ENCODE measurements at regions of chr15 and their contacts with region 1.

Region 1: GRCh38 chr15:87604857-87605446 is 651.6 kb downstream of the NTRK3 start:
- DNase-seq: no peak
- ATAC-seq: no peak

Region 2: DNA sequence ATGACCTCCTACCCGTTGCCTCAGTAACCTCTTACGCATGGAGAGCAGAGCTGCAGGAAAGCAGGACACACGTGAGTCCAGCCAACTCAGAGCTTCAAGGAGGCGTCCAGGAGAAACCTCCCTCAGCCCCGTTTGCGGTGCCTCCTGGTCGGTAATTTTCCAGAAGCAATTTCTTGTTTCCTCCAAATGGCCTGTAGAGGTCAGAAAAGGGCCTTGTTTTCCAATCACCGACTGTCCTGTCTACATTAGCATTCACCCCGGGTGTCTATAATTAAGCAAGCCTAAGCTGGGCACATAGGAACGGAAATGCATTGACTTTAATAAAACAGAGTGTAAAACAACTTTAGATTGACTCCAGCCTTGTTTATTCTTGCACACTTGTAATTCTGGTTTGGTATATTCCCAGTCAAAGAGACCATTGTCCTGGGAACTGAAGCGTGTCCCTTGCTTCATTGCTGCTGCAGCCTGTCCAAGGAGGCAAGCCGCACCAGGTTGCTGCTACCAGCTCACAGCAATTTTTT is 689.1 kb before region 1 on chr15:
- intact Hi-C with region 1: loop called (anchors 5 kb)
- DNase-seq: no peak
- ATAC-seq: peak; percentile 63

Region 3: DNA sequence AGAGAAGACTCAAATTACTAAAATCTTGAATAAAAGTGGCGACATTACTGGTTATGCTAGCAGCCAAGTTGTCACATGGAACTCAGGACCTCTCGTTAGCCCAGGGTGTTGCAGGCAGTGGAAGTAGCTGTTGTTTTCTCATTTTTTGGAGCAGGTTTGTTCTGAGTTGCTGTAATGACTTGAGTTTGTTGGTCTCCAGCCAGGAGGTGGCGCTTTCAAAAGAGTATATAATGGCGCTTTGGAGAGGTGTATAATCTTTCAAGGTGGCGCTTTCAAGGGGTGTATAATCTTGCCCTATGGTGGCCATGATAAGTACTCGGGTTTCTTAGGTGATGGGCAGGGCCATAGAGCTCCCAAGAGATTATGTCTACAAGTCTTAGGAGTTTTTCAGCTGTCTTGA is 18.9 kb after region 1 on chr15:
- intact Hi-C with region 1: no loop called
- DNase-seq: no peak
- ATAC-seq: no peak

Region 4: GRCh38 chr15:88042047-88042446 is 437.1 kb after region 1 on chr15:
- intact Hi-C with region 1: no loop called
- DNase-seq: no peak
- ATAC-seq: no peak

Measured in Right ventricle myocardium inferior (tissue), 1 donor.